CD14-positive monocyte (primary cell): ENCODE measurements at regions of chr9 and their contacts with region 1.

Region 1: DNA sequence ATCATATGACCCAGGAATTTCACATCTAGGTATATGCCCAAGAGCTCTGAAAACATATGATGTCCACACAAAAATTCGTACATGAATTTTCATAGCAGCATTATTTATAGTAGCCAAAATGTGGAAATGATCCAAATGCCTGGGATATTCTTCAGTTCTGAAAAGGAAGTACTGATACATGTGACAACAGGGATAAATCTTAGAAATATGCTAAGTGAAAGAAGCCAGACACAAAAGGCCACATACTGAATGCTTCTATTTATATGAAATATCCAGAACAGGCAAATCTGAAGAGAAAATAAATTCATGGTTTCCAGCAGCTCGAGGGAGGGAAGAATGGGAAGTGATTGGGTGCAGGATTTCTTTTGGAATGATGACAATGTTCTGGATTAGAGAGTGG is 16.8 kb upstream of the ZBTB43 start:
- DNase-seq: no peak
- H3K4me3 ChIP-seq: no peak overlapping the region
- H3K4me3 Mint-ChIP-seq: peak overlapping the region in 1 of 2 donors; percentile 10
- H3K27ac ChIP-seq: no peak overlapping the region
- H3K27ac Mint-ChIP-seq: no peak overlapping the region
- H3K4me1 ChIP-seq: no peaks in the 10 kb centered on the region
- H3K4me1 Mint-ChIP-seq: peaks cover 11% of the 10 kb centered on the region
- H3K27me3 ChIP-seq: peaks cover 7 to 18% of the 10 kb centered on the region in 2 donors
- H3K27me3 Mint-ChIP-seq: peaks cover 18 to 42% (median 30%) of the 10 kb centered on the region in 3 donors
- CTCF ChIP-seq: no peak

Region 2: DNA sequence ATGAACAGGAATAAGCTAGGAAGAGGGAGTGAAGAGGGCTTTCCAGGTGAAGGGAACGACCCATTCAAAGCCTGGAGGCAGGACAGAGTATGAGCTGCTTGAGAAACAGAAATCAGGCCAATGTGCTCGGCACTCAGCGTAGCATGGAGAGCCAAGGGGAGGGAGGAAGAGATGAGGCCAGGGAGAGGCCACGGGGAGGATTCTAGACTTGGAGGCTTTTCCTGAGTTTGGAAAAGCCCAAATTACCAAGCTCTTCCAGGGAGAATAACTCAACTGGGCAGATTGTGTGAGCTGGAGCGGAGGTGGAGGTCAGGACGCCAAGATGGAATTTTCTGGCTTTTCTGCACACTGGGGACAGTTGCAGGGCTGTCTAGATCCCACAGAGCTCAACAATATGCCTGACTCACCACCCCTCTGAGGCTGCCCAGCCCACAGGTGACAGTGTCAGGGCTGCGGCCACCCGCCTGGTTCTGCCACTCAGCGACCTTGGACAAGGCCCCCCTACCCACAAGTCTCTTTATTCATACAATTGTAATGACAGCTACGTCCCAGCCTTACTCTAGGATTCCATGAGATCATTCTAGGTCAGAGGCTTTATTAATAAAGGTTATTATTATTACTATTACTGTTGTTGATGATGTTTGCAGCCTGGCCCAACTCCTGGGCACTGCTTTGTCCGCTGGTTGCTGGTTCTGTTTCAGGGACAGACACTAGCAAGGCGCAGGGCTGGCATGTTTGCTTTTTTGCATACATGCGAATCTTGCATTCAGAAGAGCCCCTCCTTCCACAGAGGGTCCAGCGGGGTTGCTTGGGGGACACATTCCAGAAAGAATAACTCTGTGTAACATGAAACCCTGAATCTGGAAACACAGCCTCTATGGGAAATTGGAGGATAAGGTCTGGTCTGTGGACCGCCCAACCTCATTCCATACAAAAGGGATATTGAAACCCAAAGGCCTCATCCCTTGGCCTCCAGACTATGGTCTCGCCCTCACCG is 183.7 kb before region 1 on chr9:
- intact Hi-C with region 1: loop called in 1 of 2 experiments (anchors 5 kb)
- DNase-seq: no peak
- H3K4me3 ChIP-seq: no peak overlapping the region
- H3K4me3 Mint-ChIP-seq: peak overlapping the region in 1 of 2 donors; percentile 9
- H3K27ac ChIP-seq: no peak overlapping the region
- H3K27ac Mint-ChIP-seq: no peak overlapping the region
- H3K4me1 ChIP-seq: no peaks in the 10 kb centered on the region
- H3K4me1 Mint-ChIP-seq: no peaks in the 10 kb centered on the region
- H3K27me3 ChIP-seq: peaks cover 7 to 48% of the 10 kb centered on the region in 2 donors
- H3K27me3 Mint-ChIP-seq: peaks cover 55 to 81% (median 65%) of the 10 kb centered on the region in 3 donors
- CTCF ChIP-seq: no peak

Region 3: DNA sequence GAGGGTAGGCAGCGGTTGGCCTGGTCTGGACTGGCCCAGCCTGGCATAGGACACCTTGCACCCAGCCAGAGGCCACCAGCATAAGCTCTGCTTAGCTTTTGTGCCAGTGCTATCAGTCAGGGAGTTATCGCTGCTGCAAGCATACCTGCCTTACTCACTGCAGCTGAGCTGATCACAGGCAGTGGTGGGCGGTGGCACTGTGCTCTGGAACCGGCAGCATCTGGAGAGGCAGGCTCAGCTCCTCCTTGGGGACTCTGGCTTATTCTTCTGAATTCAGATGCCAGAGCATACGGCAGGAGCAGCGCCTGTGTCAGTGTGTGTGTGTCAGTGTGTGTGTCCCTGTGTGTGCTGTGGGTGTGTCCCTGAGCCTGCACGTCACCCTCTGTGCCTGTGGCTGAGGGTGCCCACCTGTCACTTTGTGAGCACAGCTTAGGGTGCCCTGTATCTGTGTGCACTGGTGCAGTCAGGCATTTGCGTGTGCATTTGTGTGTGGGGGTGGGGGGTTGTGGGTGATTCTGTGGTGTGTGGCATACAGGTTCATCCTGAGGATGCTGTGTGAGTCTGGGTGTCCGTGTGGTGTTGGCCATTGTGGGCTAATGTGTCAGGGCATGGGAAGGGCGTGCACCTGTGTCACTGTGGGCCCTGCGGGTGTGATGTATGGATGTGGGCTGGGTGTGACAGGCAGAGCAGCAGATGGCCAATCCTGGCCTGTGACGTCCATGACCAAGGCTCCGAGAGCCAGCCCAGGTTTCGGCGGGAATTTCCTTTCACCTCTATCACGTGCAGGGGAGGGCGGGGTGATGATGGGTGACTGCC is 150.9 kb before region 1 on chr9:
- intact Hi-C with region 1: no loop called
- DNase-seq: no peak
- H3K4me3 ChIP-seq: no peak overlapping the region
- H3K4me3 Mint-ChIP-seq: peak overlapping the region in 1 of 2 donors; percentile 78
- H3K27ac ChIP-seq: no peak overlapping the region
- H3K27ac Mint-ChIP-seq: no peak overlapping the region
- H3K4me1 ChIP-seq: no peaks in the 10 kb centered on the region
- H3K4me1 Mint-ChIP-seq: peaks cover 3% of the 10 kb centered on the region
- H3K27me3 ChIP-seq: peaks cover 7 to 79% of the 10 kb centered on the region in 2 donors
- H3K27me3 Mint-ChIP-seq: peaks cover 58 to 87% (median 60%) of the 10 kb centered on the region in 3 donors
- CTCF ChIP-seq: no peak

Region 4: GRCh38 chr9:126902210-126902609 is 114.2 kb after region 1 on chr9:
- intact Hi-C with region 1: no loop called
- DNase-seq: no peak
- H3K4me3 ChIP-seq: no peak overlapping the region
- H3K4me3 Mint-ChIP-seq: no peak overlapping the region
- H3K27ac ChIP-seq: no peak overlapping the region
- H3K27ac Mint-ChIP-seq: no peak overlapping the region
- H3K4me1 ChIP-seq: no peaks in the 10 kb centered on the region
- H3K4me1 Mint-ChIP-seq: no peaks in the 10 kb centered on the region
- H3K27me3 ChIP-seq: peaks cover 2% of the 10 kb centered on the region in 2 donors
- H3K27me3 Mint-ChIP-seq: peaks cover 2 to 10% (median 10%) of the 10 kb centered on the region in 3 donors
- CTCF ChIP-seq: no peak